ENCODE measurements at regions of chr2 and their contacts with region 1.

Region 1: DNA sequence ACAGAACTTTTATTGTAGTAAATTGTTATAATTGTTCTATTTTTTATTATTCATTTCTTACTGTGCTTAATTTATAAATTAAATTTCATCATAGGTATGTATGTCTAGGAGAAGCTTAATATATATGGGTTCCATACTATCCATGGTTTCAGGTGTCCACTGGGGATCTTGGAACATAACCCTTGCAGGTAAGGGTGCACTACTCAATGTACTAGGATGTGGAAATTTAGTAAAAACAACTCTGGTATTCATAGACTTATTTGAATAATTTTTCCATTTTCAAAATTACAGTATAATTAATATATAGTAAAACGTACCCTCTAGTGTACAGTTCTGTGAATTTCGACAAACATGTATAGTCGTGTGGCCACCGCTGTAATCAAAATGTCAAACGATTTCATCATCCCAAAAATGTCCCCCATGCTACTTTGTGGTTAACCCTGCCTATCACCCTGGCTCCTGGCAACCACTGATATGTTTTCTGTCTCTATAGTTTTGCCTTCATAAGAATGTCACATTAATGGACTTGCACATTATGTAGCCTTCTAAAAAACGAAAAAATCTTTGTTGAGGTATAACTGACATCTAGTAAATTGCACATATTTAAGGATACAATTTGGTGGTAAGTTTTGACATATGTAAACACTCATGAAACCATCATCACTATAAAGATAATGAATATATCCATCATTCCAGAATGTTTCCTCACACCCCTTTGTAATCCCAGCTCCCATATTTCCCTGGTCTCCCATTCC is 45.7 kb downstream of the ARL5A start:
- DNase-seq: no peak
- H3K4me3 ChIP-seq: no peak overlapping the region
- H3K27ac ChIP-seq: no peak overlapping the region
- H3K4me1 ChIP-seq: no peaks in the 10 kb centered on the region
- H3K27me3 ChIP-seq: no peaks in the 10 kb centered on the region
- CTCF ChIP-seq: no peak
- EP300 ChIP-seq: no peak
- POLR2A ChIP-seq: no peak

Region 2: GRCh38 chr2:151760139-151760650 is 22.4 kb before region 1 on chr2:
- in situ Hi-C with region 1: no loop called
- intact Hi-C with region 1: loop called (anchors 1 kb)
- DNase-seq: no peak
- H3K4me3 ChIP-seq: no peak overlapping the region
- H3K27ac ChIP-seq: no peak overlapping the region
- H3K4me1 ChIP-seq: no peaks in the 10 kb centered on the region
- H3K27me3 ChIP-seq: no peaks in the 10 kb centered on the region
- CTCF ChIP-seq: no peak
- EP300 ChIP-seq: no peak
- POLR2A ChIP-seq: no peak

Region 3: GRCh38 chr2:151828143-151828889 is 45.8 kb after region 1 on chr2 and contains the start of gene ARL5A:
- in situ Hi-C with region 1: no loop called
- intact Hi-C with region 1: no loop called
- DNase-seq: peak; percentile 96
- H3K4me3 ChIP-seq: peak within 1 kb of the TSS; percentile 81 to 100 (median 88)
- H3K27ac ChIP-seq: peak within 1 kb of the TSS; percentile 81 to 92 (median 88)
- H3K4me1 ChIP-seq: peaks cover 0 to 43% (median 18%) of the 10 kb centered on the region in 4 donors
- H3K27me3 ChIP-seq: no peaks in the 10 kb centered on the region
- CTCF ChIP-seq: no peak
- EP300 ChIP-seq: no peak
- POLR2A ChIP-seq: peak; percentile 84
- total RNA-seq, gene ARL5A: 6.6 to 42.2 (median 23.6) TPM

Region 4: DNA sequence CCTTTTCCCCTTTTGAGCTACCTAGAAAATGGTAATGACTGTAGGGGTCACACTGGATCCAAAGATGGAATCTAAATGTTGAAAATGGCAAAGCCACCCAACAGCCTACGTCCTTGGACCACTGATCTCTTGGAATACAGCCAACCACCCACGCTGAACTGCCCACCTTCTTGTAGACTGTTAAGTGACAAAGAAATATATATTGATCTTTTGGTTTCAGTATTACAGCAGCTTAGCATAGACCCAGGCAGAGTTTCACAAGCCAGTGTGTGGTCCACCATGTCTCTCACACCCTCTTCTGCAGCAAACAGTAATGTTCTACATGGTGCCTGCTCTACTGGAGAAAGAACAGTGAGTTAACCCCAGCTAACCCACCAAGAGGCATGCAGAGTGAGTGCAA is 296.1 kb after region 1 on chr2:
- in situ Hi-C with region 1: no loop called
- intact Hi-C with region 1: no loop called
- DNase-seq: no peak
- H3K4me3 ChIP-seq: no peak overlapping the region
- H3K27ac ChIP-seq: no peak overlapping the region
- H3K4me1 ChIP-seq: no peaks in the 10 kb centered on the region
- H3K27me3 ChIP-seq: no peaks in the 10 kb centered on the region
- CTCF ChIP-seq: no peak
- EP300 ChIP-seq: no peak
- POLR2A ChIP-seq: no peak

Region 5: GRCh38 chr2:152189622-152190495 is 407.3 kb after region 1 on chr2:
- in situ Hi-C with region 1: no loop called
- intact Hi-C with region 1: no loop called
- DNase-seq: peak; percentile 35
- H3K4me3 ChIP-seq: no peak overlapping the region
- H3K27ac ChIP-seq: no peak overlapping the region
- H3K4me1 ChIP-seq: no peaks in the 10 kb centered on the region
- H3K27me3 ChIP-seq: no peaks in the 10 kb centered on the region
- CTCF ChIP-seq: peak; percentile 67 to 87 (median 76)
- EP300 ChIP-seq: no peak
- POLR2A ChIP-seq: no peak